ENCODE measurements at regions of chr6 and their contacts with region 1.

Region 1: GRCh38 chr6:106372838-106373501 is 12.5 kb downstream of the CRYBG1 start:
- DNase-seq: peak; percentile 86
- H3K4me3 ChIP-seq: no peak overlapping the region
- H3K27ac ChIP-seq: peak overlapping the region; percentile 86
- H3K4me1 ChIP-seq: peaks cover 78% of the 10 kb centered on the region
- H3K27me3 ChIP-seq: no peaks in the 10 kb centered on the region
- CTCF ChIP-seq: no peak

Region 2: DNA sequence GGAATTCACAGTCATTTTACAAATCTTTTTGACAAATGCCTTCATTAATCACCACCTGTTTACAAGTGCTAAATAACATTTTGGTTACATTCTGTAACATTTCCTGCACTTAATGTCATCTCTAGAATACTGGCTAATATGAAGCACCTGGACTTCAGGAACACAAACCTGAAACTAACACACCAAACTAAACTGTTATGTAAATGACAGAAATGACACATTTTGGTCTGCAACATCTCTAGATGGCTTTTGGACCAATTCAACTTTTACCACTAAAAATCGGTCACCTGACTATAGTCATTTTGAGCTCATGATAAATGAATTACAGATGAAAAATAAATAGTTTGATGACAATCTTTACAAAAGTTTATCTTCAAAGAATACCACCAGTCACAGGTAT is 128.0 kb before region 1 on chr6:
- CTCF ChIA-PET with region 1: no interaction called
- dilution Hi-C with region 1: no loop called
- in situ Hi-C with region 1: no loop called
- intact Hi-C with region 1: no loop called
- DNase-seq: no peak
- H3K4me3 ChIP-seq: no peak overlapping the region
- H3K27ac ChIP-seq: no peak overlapping the region
- H3K4me1 ChIP-seq: no peaks in the 10 kb centered on the region
- H3K27me3 ChIP-seq: no peaks in the 10 kb centered on the region
- CTCF ChIP-seq: no peak

Region 3: GRCh38 chr6:106431972-106432371 is 59.0 kb after region 1 on chr6:
- CTCF ChIA-PET with region 1: interaction called, 11 read pairs
- dilution Hi-C with region 1: no loop called
- in situ Hi-C with region 1: no loop called
- intact Hi-C with region 1: no loop called
- DNase-seq: no peak
- H3K4me3 ChIP-seq: no peak overlapping the region
- H3K27ac ChIP-seq: no peak overlapping the region
- H3K4me1 ChIP-seq: peaks cover 12% of the 10 kb centered on the region
- H3K27me3 ChIP-seq: no peaks in the 10 kb centered on the region
- CTCF ChIP-seq: no peak

Region 4: GRCh38 chr6:106556368-106556960 is 183.5 kb after region 1 on chr6:
- CTCF ChIA-PET with region 1: no interaction called
- dilution Hi-C with region 1: loop called (anchors 5 kb)
- in situ Hi-C with region 1: loop called (anchors 10 kb)
- intact Hi-C with region 1: no loop called
- DNase-seq: no peak
- H3K4me3 ChIP-seq: no peak overlapping the region
- H3K27ac ChIP-seq: no peak overlapping the region
- H3K4me1 ChIP-seq: peaks cover 26% of the 10 kb centered on the region
- H3K27me3 ChIP-seq: no peaks in the 10 kb centered on the region
- CTCF ChIP-seq: peak in 1 of 2 donors; percentile 47